Heart left ventricle (tissue), 16 donors: ENCODE measurements at regions of chr2 and their contacts with region 1.

Region 1: DNA sequence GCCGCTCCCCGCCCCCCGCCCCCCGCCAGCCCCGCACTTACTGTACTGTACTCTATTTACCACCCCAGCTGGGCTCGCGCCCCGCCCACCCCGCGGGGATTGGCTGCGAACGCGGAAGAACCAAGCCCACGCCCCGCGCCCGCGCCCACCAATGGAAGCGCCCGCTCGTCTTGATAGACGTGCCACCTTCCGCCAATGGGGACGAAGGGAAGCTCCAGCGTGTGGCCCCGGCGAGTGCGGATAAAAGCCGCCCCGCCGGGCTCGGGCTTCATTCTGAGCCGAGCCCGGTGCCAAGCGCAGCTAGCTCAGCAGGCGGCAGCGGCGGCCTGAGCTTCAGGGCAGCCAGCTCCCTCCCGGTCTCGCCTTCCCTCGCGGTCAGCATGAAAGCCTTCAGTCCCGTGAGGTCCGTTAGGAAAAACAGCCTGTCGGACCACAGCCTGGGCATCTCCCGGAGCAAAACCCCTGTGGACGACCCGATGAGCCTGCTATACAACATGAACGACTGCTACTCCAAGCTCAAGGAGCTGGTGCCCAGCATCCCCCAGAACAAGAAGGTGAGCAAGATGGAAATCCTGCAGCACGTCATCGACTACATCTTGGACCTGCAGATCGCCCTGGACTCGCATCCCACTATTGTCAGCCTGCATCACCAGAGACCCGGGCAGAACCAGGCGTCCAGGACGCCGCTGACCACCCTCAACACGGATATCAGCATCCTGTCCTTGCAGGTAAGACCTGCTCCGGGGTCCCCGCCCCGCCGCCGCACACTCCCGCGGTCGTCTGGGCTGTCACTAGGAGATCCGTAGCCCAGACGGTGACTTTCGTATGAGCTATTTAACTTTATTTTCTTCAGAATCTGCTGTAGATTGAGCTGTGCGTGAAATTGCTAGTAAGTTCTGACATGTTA is at the start of gene ID2:
- DNase-seq: peak; percentile 99 to 100 (median 100)
- ATAC-seq: peak; percentile 82 to 89 (median 87)
- H3K4me3 ChIP-seq: peak within 1 kb of the TSS; percentile 68 to 92 (median 84)
- H3K27ac ChIP-seq: peak within 1 kb of the TSS; percentile 88 to 100 (median 99)
- H3K4me1 ChIP-seq: peaks cover 0 to 50% (median 33%) of the 10 kb centered on the region in 12 donors
- H3K27me3 ChIP-seq: peaks cover 0 to 3% (median 0%) of the 10 kb centered on the region in 9 donors
- CTCF ChIP-seq: no peak
- POLR2A ChIP-seq: peak; percentile 93 to 100
- total RNA-seq, gene ID2: 17.3 to 121 (median 25.5) TPM

Region 2: GRCh38 chr2:7118606-7119503 is 1563.2 kb before region 1 on chr2:
- intact Hi-C with region 1: loop called in 1 of 10 experiments (anchors 5 kb)
- DNase-seq: no peak
- ATAC-seq: peak in 3 of 4 donors; percentile 36 to 56 (median 49)
- H3K4me3 ChIP-seq: no peak overlapping the region
- H3K27ac ChIP-seq: no peak overlapping the region
- H3K4me1 ChIP-seq: peaks cover 0 to 4% (median 0%) of the 10 kb centered on the region in 12 donors
- H3K27me3 ChIP-seq: no peaks in the 10 kb centered on the region
- CTCF ChIP-seq: peak in 10 of 12 donors; percentile 19 to 66 (median 36)
- POLR2A ChIP-seq: no peak

Region 3: DNA sequence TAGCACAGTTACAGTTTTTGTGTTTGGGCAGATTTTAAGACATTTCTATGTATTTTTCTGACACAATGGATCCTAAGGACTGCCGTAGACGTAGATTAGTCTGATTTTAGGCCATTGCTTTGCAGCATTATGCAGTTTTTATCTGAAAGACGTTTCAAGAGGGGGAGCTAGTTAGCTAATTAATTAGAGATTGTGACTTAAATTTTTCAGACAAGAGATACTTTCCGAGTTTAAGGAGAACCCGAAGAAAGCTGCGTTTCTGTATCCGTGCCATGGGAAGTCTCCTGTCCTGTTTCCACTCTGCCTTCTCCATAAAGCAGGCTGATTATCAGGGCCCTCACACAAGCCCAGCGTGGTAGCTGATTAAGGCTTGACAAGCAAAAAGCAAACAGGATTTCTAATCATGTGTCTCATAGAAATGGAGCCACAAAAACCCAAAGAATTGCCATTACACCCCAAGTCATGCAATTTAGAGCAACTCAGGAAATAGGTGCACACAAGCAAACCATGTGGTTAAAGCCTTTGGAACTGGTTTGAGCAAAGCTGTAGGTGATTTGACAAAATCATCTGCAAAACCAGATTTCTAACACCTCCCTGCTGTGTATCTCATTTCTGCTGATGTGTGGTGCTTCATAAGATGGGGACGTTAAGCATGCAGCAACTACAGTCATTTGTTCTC is 956.7 kb before region 1 on chr2:
- intact Hi-C with region 1: loop called in 4 of 10 experiments (anchors 5 to 10 kb)
- DNase-seq: no peak
- ATAC-seq: peak in 1 of 4 donors; percentile 9
- H3K4me3 ChIP-seq: peak overlapping the region in 1 of 12 donors; percentile 43
- H3K27ac ChIP-seq: peak overlapping the region in 1 of 12 donors; percentile 60
- H3K4me1 ChIP-seq: peaks cover 0 to 4% (median 0%) of the 10 kb centered on the region in 12 donors
- H3K27me3 ChIP-seq: no peaks in the 10 kb centered on the region
- CTCF ChIP-seq: peak in 5 of 12 donors; percentile 13 to 33 (median 18)
- POLR2A ChIP-seq: no peak

Region 4: DNA sequence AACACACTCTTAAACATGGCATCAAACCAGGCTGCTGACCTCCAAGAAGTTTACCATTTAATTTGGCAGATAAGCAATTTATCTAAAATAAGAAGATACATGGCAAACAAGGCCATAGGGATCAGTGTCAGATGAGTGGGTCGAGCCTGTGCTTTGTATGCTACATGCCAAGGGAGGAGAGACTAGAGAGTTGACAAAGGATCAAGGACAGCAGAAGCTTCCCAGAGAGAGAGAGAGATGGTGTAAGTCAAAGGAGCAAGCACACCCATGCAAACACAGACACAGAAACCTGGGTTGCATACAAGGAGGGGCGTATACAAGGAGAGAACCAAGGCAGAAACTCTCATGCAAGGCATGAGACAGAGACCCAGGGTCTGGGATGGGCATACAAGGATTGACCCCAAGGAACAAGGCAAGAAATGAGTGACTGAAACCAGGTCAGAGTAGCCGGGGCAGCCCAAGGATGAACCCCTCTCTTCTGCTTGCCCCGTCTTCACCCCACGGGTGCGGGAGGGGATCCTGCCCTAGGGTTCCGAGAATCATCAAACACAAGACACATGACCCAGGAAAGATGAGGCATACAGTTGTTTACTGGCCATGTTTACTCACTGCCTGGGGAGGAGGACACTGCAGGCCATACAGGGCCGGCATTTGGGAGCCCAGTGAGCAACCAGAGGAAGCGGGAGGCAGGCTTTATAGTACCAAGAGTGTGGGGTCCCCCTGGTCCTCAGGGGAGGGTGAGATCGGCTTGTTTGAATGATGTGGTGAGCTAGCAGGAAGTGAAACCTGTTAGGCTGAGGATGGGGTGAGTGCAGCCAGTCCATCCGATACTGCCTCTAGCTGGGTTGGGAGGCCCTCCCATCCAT is 529.4 kb before region 1 on chr2:
- intact Hi-C with region 1: loop called in 2 of 10 experiments (anchors 5 to 10 kb)
- DNase-seq: no peak
- ATAC-seq: no peak
- H3K4me3 ChIP-seq: no peak overlapping the region
- H3K27ac ChIP-seq: no peak overlapping the region
- H3K4me1 ChIP-seq: peaks cover 0 to 9% (median 0%) of the 10 kb centered on the region in 12 donors
- H3K27me3 ChIP-seq: no peaks in the 10 kb centered on the region
- CTCF ChIP-seq: no peak
- POLR2A ChIP-seq: no peak

Region 5: DNA sequence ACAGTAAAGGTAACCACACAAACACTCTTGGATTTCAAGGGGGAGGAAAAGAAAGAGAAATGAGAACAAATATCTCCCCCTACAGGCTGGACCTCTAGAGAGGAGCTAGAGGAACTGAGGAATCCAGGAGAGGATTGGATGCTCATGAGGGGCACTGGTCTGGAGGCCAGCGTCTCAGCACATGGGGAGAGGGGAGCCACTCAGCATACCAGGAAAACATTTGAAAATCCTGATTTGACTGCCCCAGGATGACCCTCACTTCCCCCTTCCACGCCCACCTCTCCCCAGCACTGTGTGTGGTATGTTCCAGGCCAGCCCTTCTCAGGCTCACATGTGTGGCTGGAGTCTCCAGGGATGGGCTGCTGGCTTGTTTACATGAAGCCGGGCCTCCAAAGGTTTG is 397.0 kb before region 1 on chr2:
- intact Hi-C with region 1: loop called in 1 of 10 experiments (anchors 10 kb)
- DNase-seq: no peak
- ATAC-seq: peak; percentile 13 to 33 (median 18)
- H3K4me3 ChIP-seq: no peak overlapping the region
- H3K27ac ChIP-seq: no peak overlapping the region
- H3K4me1 ChIP-seq: no peaks in the 10 kb centered on the region
- H3K27me3 ChIP-seq: peaks cover 0 to under 1% (median 0%) of the 10 kb centered on the region in 9 donors
- CTCF ChIP-seq: peak in 9 of 12 donors; percentile 7 to 45 (median 27)
- POLR2A ChIP-seq: no peak

Region 6: GRCh38 chr2:8514796-8515758 is 167.0 kb before region 1 on chr2:
- intact Hi-C with region 1: loop called in 4 of 10 experiments (anchors 5 to 10 kb)
- DNase-seq: peak in 4 of 5 donors; percentile 45 to 72 (median 61)
- ATAC-seq: peak; percentile 73 to 85 (median 78)
- H3K4me3 ChIP-seq: no peak overlapping the region
- H3K27ac ChIP-seq: peak overlapping the region in 11 of 12 donors; percentile 18 to 75 (median 52)
- H3K4me1 ChIP-seq: peaks cover 0 to 64% (median 13%) of the 10 kb centered on the region in 12 donors
- H3K27me3 ChIP-seq: no peaks in the 10 kb centered on the region
- CTCF ChIP-seq: no peak
- POLR2A ChIP-seq: no peak

Region 7: GRCh38 chr2:8598295-8599165 is 83.5 kb before region 1 on chr2:
- intact Hi-C with region 1: loop called in 3 of 10 experiments (anchors 5 to 10 kb)
- DNase-seq: peak in 1 of 5 donors; percentile 48
- ATAC-seq: peak in 2 of 4 donors; percentile 71 to 80
- H3K4me3 ChIP-seq: no peak overlapping the region
- H3K27ac ChIP-seq: no peak overlapping the region
- H3K4me1 ChIP-seq: peaks cover 0 to 10% (median 0%) of the 10 kb centered on the region in 12 donors
- H3K27me3 ChIP-seq: no peaks in the 10 kb centered on the region
- CTCF ChIP-seq: no peak
- POLR2A ChIP-seq: no peak